PC-3 (cell line): ENCODE measurements at regions of chr20 and their contacts with region 1.

Region 1: GRCh38 chr20:38387953-38388352 is 41.7 kb downstream of the LBP start:
- DNase-seq: peak; percentile 7
- ATAC-seq: peak; percentile 48; the same call in 1 of the 2 replicates
- H3K4me3 ChIP-seq: no peak overlapping the region
- H3K27ac ChIP-seq: no peak overlapping the region
- H3K4me1 ChIP-seq: no peaks in the 10 kb centered on the region
- H3K27me3 ChIP-seq: no peaks in the 10 kb centered on the region
- CTCF ChIP-seq: peak; percentile 25; the same call in 1 of the 2 replicates

Region 2: DNA sequence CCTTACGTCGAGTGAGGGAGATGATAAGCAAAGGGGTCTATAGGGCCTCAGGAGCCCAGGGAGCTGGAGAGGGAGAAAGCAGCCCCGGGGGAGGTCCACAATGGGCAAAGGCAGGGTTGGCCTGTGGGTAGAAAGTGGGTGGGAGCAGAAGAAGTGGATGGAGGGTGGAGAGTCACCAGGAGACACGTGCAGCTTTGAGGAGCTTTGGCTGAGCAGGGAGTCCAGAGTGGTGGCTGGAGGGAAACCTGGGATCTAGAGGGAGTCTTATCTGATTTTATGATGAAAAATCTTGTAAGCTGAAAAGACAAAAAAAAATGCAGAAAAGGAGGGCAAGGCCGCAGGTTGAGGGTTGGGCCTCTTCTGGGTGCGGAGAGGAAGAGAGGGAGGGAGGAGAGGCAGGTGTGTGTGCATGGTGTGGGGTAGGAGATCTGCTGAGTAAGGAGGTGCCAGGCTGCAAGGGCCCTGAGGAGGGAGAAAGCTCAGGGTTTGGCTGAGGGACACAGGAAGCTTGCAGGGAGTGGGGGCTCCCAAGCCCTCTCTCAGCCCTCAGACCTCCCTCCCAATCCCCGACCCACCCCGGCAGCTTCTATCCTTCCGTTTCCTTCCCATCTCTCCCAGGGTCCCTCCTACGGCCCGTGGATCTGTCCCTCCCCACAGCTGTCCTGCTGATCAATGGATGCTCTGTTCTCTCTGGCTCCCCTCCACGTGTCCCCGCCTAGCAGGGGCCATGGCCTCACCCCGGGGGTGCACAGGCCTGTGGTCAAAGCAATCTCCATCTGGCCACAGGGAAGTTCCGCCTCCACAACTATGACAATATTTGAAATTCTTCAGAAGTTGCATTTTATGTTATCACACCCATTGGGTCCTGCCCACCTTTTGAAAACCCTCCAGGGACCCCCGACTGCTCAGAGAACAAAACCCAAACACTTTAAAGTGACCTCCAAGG is 101.1 kb before region 1 on chr20:
- CTCF ChIA-PET with region 1: no interaction called
- POLR2A ChIA-PET with region 1: no interaction called
- intact Hi-C with region 1: no loop called
- DNase-seq: no peak
- ATAC-seq: no peak
- H3K4me3 ChIP-seq: no peak overlapping the region
- H3K27ac ChIP-seq: no peak overlapping the region
- H3K4me1 ChIP-seq: no peaks in the 10 kb centered on the region
- H3K27me3 ChIP-seq: no peaks in the 10 kb centered on the region
- CTCF ChIP-seq: no peak

Region 3: DNA sequence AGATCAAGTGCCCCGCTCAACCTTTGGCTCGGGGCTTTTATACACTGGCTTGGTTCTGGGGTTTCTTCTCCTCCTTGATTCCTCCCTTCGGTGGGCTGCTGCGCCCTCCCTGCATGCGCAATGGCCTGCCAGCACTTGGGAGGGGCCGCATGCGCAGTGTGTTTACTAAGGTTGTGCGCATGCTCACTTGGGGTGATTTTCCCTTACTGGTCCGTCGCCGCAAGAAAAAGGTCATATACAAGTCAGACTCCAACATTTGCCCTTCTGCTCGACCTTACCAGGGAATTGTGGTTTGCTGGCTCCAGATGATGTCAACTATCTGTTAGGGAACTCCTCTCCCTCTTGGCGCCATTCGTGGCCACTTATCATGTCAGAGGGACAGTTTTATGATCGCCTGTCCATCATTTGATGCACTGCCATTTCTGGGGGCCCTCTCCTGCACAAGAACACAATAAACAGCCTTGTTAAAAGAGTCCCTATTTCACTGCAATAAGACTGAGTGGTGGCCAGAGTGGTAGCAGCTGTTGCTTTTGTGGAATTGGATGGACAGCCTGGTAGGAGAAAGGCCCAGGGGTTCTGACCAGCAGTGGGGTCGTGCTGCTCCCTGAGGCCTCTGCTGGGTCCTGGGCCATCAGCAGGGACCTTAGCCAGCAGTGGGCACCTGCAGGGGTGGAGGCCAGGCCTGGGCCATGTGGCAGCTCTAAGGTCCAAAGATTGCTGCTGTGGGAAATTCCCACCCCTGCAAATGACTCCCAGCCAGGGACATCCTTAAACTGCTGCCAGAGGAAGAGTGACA is 44.4 kb before region 1 on chr20:
- CTCF ChIA-PET with region 1: no interaction called
- POLR2A ChIA-PET with region 1: no interaction called
- intact Hi-C with region 1: no loop called
- DNase-seq: no peak
- ATAC-seq: no peak
- H3K4me3 ChIP-seq: no peak overlapping the region
- H3K27ac ChIP-seq: no peak overlapping the region
- H3K4me1 ChIP-seq: no peaks in the 10 kb centered on the region
- H3K27me3 ChIP-seq: no peaks in the 10 kb centered on the region
- CTCF ChIP-seq: no peak

Region 4: GRCh38 chr20:38373231-38373867 is 14.6 kb before region 1 on chr20:
- CTCF ChIA-PET with region 1: interaction called, 15 read pairs
- POLR2A ChIA-PET with region 1: no interaction called
- intact Hi-C with region 1: no loop called
- DNase-seq: no peak
- ATAC-seq: no peak
- H3K4me3 ChIP-seq: no peak overlapping the region
- H3K27ac ChIP-seq: no peak overlapping the region
- H3K4me1 ChIP-seq: no peaks in the 10 kb centered on the region
- H3K27me3 ChIP-seq: peaks cover 37% of the 10 kb centered on the region
- CTCF ChIP-seq: no peak

Region 5: DNA sequence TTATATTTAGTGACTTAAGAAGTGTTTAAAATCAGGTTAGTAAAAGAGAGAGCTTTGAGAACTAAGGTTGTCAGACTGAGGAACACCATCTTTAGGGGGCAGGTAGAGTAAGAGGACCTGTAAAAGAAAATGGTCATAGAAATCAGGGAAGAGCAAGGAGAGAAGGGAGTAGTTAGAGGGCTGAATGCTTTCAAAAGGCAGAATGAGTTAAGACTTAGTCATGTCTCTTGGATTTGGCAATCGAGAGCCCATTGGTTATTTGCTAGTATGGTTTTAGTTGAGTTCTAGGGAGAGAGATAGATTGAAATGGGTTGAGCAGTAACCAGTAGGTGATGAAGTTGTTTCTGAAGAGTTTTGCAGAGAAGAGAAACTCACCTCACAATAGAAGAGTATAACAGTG is 135.7 kb after region 1 on chr20:
- CTCF ChIA-PET with region 1: no interaction called
- POLR2A ChIA-PET with region 1: no interaction called
- intact Hi-C with region 1: no loop called
- DNase-seq: peak; percentile 69
- ATAC-seq: peak; percentile 68
- H3K4me3 ChIP-seq: no peak overlapping the region
- H3K27ac ChIP-seq: no peak overlapping the region
- H3K4me1 ChIP-seq: peaks cover 11% of the 10 kb centered on the region; the same call in 1 of the 2 replicates
- H3K27me3 ChIP-seq: no peaks in the 10 kb centered on the region
- CTCF ChIP-seq: no peak